ENCODE measurements at regions of chr16 and their contacts with region 1.

Region 1: GRCh38 chr16:83441517-83441916 is 366.3 kb upstream of the HSBP1 start:
- DNase-seq: peak; percentile 36
- H3K4me3 ChIP-seq: no peak overlapping the region
- H3K27ac ChIP-seq: no peak overlapping the region
- H3K4me1 ChIP-seq: no peaks in the 10 kb centered on the region
- H3K27me3 ChIP-seq: no peaks in the 10 kb centered on the region
- CTCF ChIP-seq: no peak

Region 2: DNA sequence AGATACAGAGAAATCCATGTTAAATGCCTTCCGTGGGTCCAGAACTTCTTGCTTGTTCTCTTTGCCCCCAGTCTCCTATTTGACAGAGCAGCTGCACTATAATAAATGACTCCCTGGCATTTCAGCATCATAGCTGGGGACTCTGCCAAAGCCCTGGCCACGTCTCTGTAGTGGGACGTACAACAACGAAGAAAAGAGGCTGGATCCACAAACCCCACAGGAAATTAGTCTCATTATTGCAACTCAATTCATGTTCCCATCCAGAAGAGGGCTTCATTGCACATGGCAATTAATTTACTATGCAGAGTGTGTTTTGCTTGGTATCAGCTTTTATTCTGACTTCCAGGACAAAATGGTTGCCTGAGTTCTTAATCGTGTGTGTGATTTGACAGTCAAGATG is 693.5 kb before region 1 on chr16:
- CTCF ChIA-PET with region 1: no interaction called
- dilution Hi-C with region 1: no loop called
- in situ Hi-C with region 1: no loop called
- intact Hi-C with region 1: loop called (anchors 10 kb)
- DNase-seq: peak; percentile 16
- H3K4me3 ChIP-seq: no peak overlapping the region
- H3K27ac ChIP-seq: no peak overlapping the region
- H3K4me1 ChIP-seq: no peaks in the 10 kb centered on the region
- H3K27me3 ChIP-seq: no peaks in the 10 kb centered on the region
- CTCF ChIP-seq: peak in 1 of 2 donors; percentile 9

Region 3: GRCh38 chr16:83356266-83356665 is 85.3 kb before region 1 on chr16:
- CTCF ChIA-PET with region 1: no interaction called
- dilution Hi-C with region 1: no loop called
- in situ Hi-C with region 1: no loop called
- intact Hi-C with region 1: loop called (anchors 1 kb)
- DNase-seq: peak; percentile 83
- H3K4me3 ChIP-seq: no peak overlapping the region
- H3K27ac ChIP-seq: no peak overlapping the region
- H3K4me1 ChIP-seq: no peaks in the 10 kb centered on the region
- H3K27me3 ChIP-seq: no peaks in the 10 kb centered on the region
- CTCF ChIP-seq: peak; percentile 75 to 81

Region 4: DNA sequence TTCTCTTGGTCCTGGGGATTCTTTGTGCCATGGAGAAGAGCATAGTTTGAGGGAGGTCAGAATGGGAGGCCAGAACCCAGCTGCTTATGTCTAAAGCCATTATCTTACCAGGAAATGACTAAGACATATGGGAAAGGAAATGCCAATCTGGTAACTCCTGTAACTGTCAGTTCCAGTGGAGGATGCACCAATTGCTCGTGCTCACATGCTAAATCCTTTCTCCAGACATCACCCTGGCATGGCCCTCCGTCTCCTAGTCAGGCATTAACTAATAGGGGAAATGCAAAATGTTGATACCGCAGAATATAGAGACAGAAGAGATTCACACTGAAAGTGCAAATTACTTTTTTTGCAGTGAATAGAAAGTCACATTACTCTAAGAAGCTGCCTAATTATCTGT is 110.7 kb after region 1 on chr16:
- CTCF ChIA-PET with region 1: no interaction called
- dilution Hi-C with region 1: no loop called
- in situ Hi-C with region 1: no loop called
- intact Hi-C with region 1: no loop called
- DNase-seq: peak; percentile 42
- H3K4me3 ChIP-seq: no peak overlapping the region
- H3K27ac ChIP-seq: no peak overlapping the region
- H3K4me1 ChIP-seq: peaks cover 9% of the 10 kb centered on the region
- H3K27me3 ChIP-seq: no peaks in the 10 kb centered on the region
- CTCF ChIP-seq: no peak